Naive thymus-derived CD8-positive, alpha-beta T cell (primary cell): ENCODE measurements at regions of chr19 and their contacts with region 1.

Region 1: GRCh38 chr19:57362997-57363705 is at the starts of genes TRAPPC2B and ZNF547:
- DNase-seq: peak; percentile 93 to 99 (median 98)
- ATAC-seq: peak; percentile 90 to 93
- H3K4me3 Mint-ChIP-seq: peak within 1 kb of the TSS; percentile 84 to 96 (median 94)
- H3K27ac Mint-ChIP-seq: peak within 1 kb of the TSS; percentile 95 to 99 (median 98)
- H3K4me1 Mint-ChIP-seq: peaks cover 12 to 18% (median 17%) of the 10 kb centered on the region in 4 donors
- H3K27me3 Mint-ChIP-seq: no peaks in the 10 kb centered on the region
- polyA plus RNA-seq, gene TRAPPC2B: 15.0 to 20.5 (median 19.1) TPM
- polyA plus RNA-seq, gene ZNF547: 0.28 to 1.2 (median 0.34) TPM

Region 2: DNA sequence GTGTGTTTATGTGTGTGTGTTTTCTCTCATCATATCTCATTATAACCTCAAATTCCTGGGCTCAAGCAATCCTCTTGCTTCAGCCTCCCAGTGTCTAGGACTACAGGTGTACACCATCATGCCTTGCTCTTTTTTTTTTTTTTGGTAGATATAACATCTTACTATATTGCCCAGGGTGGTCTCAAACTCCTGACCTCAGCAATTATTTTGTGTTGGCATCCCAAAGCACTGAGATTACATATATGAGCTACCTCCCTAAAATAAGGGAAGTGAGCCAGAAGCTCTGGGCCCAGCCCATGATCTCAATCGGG is 43.3 kb before region 1 on chr19:
- POLR2A ChIA-PET with region 1: no interaction called
- DNase-seq: no peak
- ATAC-seq: peak in 1 of 2 donors; percentile 3
- H3K4me3 Mint-ChIP-seq: peak overlapping the region; percentile 89 to 98 (median 95)
- H3K27ac Mint-ChIP-seq: peak overlapping the region; percentile 94 to 98 (median 98)
- H3K4me1 Mint-ChIP-seq: peaks cover 15 to 32% (median 28%) of the 10 kb centered on the region in 4 donors
- H3K27me3 Mint-ChIP-seq: peaks cover 18 to 34% (median 24%) of the 10 kb centered on the region in 5 donors

Region 3: DNA sequence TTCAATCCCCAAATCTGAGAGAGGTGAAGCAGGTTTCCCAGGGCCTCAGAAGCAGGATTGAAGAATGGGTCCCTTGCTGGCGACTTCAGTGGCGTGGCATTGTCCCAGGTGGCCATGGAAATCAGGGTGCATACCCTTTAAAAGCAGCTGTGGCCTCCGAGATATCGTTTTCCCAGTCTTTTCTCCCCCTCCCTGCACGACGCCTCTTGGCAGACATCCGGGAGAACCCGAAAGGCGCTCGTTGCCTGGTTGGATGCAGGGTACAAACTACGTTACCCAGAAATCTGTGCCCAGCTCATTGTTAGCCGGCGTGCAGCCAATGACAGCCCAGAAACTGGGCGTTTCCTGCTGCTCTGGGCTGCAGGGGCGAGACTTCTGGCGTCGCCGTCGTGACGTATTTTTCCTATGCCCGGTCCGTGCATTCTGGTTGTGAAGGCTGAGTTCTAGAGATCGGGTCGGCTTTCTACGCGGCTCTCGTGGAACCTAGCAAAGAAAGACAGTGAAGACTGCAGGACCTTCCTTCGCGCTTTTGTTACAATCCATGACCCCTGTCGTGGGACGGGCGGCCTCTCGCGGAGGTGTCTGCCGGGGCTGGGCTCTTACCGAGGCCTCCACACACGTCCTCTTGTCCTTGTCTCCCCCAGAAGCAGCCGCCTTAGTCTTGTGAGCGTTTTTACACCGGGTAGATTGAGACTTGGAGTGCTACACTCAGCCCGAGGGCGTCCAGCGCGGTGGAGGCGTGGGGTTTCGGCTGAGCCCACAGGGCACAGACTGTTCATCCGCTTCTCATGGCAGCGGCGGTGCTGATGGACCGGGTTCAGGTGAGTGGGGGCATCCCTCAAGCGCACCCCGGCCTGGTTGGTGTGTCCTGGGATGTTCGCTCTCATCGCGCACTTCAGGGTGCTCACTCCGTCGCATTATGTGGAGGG is 12.0 kb before region 1 on chr19 and contains the start of gene ZNF304:
- POLR2A ChIA-PET with region 1: interaction called, 10 read pairs
- DNase-seq: peak; percentile 57 to 89 (median 79)
- ATAC-seq: peak; percentile 99
- H3K4me3 Mint-ChIP-seq: peak within 1 kb of the TSS; percentile 93 to 98 (median 96)
- H3K27ac Mint-ChIP-seq: peak within 1 kb of the TSS; percentile 83 to 98 (median 96)
- H3K4me1 Mint-ChIP-seq: peaks cover 28 to 34% (median 33%) of the 10 kb centered on the region in 4 donors
- H3K27me3 Mint-ChIP-seq: peaks cover 0 to 9% (median 0%) of the 10 kb centered on the region in 5 donors
- polyA plus RNA-seq, gene ZNF304: 1.5 to 3.3 (median 1.7) TPM